Uterus (tissue), 4 donors: ENCODE measurements at regions of chr15 and their contacts with region 1.

Region 1: GRCh38 chr15:45457641-45458433 is 64.7 kb downstream of the SLC30A4 start:
- DNase-seq: peak; percentile 61 to 79
- H3K4me3 ChIP-seq: peak overlapping the region; percentile 43 to 46
- H3K27ac ChIP-seq: peak overlapping the region; percentile 83 to 95
- H3K4me1 ChIP-seq: no peaks in the 10 kb centered on the region
- H3K27me3 ChIP-seq: no peaks in the 10 kb centered on the region
- CTCF ChIP-seq: peak; percentile 58 to 81 (median 66)
- POLR2A ChIP-seq: no peak

Region 2: DNA sequence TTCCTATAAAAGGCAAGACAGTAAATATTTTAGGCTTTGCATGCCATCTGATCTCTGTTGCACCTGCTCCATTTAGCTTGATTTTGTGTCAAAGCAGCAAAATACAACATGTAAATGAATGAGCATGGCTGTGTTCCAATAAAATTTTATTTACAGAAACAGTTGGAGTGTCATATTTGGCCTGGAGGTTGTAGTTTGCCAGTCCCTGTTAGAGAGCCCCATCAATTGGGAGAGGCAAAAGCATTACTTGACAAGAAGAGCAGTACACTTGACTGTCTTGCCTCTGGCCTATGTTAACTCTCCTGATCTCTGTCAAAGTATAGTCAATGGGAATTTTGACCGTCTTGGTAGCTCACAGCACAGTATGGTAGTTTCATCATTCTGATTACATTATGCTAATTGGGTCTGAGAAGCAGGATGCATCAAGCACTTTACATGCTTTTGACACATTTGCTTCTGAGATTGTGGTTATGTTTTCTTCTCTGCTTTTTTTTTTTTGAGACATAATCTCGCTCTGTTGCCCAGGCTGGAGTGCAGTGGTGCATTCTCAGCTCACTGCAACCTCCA is 170.4 kb before region 1 on chr15:
- intact Hi-C with region 1: no loop called
- DNase-seq: no peak
- H3K4me3 ChIP-seq: no peak overlapping the region
- H3K27ac ChIP-seq: no peak overlapping the region
- H3K4me1 ChIP-seq: no peaks in the 10 kb centered on the region
- H3K27me3 ChIP-seq: peaks cover 0 to 3% of the 10 kb centered on the region in 2 donors
- CTCF ChIP-seq: no peak
- POLR2A ChIP-seq: no peak

Region 3: DNA sequence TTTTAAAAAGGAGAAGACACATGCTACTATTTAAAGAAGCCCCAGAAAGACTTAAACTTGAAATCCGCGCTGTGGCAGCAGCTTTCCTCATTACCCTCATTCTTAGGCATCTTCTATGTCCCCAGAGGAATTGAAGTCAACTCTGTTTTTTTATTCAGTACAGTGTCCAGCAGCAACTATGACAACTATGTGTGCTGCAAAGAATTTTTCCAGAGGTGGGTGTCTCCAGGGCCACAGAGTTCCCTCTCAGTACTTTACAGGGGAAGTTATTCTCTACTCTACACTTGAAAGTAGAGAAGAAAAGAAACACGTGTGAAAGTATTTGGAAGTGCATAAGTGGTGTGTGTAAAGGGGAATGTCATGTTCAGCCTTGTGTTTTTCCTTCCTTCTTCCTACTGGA is 111.5 kb before region 1 on chr15:
- intact Hi-C with region 1: no loop called
- DNase-seq: no peak
- H3K4me3 ChIP-seq: no peak overlapping the region
- H3K27ac ChIP-seq: no peak overlapping the region
- H3K4me1 ChIP-seq: no peaks in the 10 kb centered on the region
- H3K27me3 ChIP-seq: no peaks in the 10 kb centered on the region
- CTCF ChIP-seq: no peak
- POLR2A ChIP-seq: no peak

Region 4: DNA sequence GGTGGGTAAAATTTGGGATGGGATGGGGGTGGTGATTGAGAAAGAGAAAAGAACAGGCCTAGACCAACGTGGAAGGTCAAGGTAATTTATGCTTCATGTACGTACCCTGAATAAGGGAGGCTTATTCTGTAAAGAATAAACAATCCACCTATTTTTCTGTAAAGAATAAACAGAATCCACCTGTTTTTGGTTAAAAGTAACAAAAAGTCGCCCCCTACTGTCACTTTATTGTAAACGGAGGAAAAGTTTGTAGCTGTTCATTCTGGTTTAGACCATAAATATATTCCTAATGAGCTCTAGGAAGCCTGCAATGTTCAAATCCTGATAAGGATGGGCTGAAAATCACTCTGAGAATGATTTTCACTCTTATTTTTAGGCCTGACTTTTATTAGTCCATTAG is 153.5 kb after region 1 on chr15:
- intact Hi-C with region 1: loop called (anchors 10 kb)
- DNase-seq: no peak
- H3K4me3 ChIP-seq: no peak overlapping the region
- H3K27ac ChIP-seq: no peak overlapping the region
- H3K4me1 ChIP-seq: no peaks in the 10 kb centered on the region
- H3K27me3 ChIP-seq: no peaks in the 10 kb centered on the region
- CTCF ChIP-seq: peak in 1 of 4 experiments; percentile 10
- POLR2A ChIP-seq: no peak

Region 5: GRCh38 chr15:46297766-46298165 is 839.9 kb after region 1 on chr15:
- intact Hi-C with region 1: no loop called
- DNase-seq: no peak
- H3K4me3 ChIP-seq: no peak overlapping the region
- H3K27ac ChIP-seq: no peak overlapping the region
- H3K4me1 ChIP-seq: no peaks in the 10 kb centered on the region
- H3K27me3 ChIP-seq: no peaks in the 10 kb centered on the region
- CTCF ChIP-seq: no peak
- POLR2A ChIP-seq: no peak